Endothelial cell of umbilical vein (primary cell): ENCODE measurements at regions of chr7 and their contacts with region 1.

Region 1: GRCh38 chr7:2608921-2609411 is 22.8 kb upstream of the TTYH3 start:
- DNase-seq: peak; percentile 76
- H3K4me3 ChIP-seq: no peak overlapping the region
- H3K27ac ChIP-seq: no peak overlapping the region
- H3K4me1 ChIP-seq: peaks cover 13% of the 10 kb centered on the region
- H3K27me3 ChIP-seq: no peaks in the 10 kb centered on the region
- CTCF ChIP-seq: peak; percentile 70 to 73
- POLR2A ChIP-seq: no peak

Region 2: GRCh38 chr7:2384354-2385243 is 224.4 kb before region 1 on chr7:
- CTCF ChIA-PET with region 1: no interaction called
- POLR2A ChIA-PET with region 1: no interaction called
- dilution Hi-C with region 1: no loop called
- intact Hi-C with region 1: no loop called
- DNase-seq: no peak
- H3K4me3 ChIP-seq: no peak overlapping the region
- H3K27ac ChIP-seq: no peak overlapping the region
- H3K4me1 ChIP-seq: no peaks in the 10 kb centered on the region
- H3K27me3 ChIP-seq: no peaks in the 10 kb centered on the region
- CTCF ChIP-seq: no peak
- POLR2A ChIP-seq: no peak

Region 3: DNA sequence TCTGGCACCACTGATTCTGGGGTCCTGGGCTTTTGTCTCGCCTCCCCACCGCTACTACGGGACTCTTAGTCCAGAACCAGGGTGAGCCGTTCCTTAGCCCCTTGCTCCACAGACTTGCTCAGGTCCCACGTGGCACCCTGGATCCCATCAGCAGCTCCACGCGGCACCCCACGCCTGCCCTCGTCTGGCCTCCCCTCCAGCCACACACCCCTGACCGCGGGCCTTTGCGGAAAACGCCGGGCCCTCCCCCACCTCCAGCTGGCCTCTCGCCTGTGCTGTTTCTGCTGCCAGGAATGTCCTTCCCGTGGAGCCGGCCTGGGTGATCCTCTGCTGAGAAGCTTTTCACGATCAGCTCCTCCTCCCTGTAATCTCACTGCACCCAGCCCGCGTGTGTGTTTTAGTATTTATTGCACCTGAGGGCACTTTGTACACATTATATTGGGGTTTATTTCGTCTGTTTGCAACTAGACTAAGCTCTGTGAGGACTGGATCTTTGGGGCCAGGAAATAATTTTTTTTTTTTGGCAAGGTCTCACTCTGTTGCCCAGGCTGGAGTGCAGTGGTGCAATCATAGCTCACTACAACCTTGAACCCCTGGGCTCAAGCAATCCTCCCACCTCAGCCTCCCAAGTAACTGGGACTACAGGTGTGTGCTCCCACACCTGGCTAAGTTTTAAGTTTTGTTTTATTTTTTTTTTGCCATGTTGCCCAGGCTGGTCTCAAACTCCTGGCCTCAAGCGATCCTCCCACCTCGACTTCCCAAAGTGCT is 12.3 kb after region 1 on chr7:
- CTCF ChIA-PET with region 1: interaction called, 31 read pairs
- POLR2A ChIA-PET with region 1: no interaction called
- dilution Hi-C with region 1: no loop called
- intact Hi-C with region 1: no loop called
- DNase-seq: peak; percentile 49
- H3K4me3 ChIP-seq: no peak overlapping the region
- H3K27ac ChIP-seq: no peak overlapping the region
- H3K4me1 ChIP-seq: peaks cover 14% of the 10 kb centered on the region
- H3K27me3 ChIP-seq: no peaks in the 10 kb centered on the region
- CTCF ChIP-seq: no peak
- POLR2A ChIP-seq: no peak

Region 4: GRCh38 chr7:2632733-2633537 is 24.0 kb after region 1 on chr7:
- CTCF ChIA-PET with region 1: interaction called, 42 read pairs
- POLR2A ChIA-PET with region 1: no interaction called
- dilution Hi-C with region 1: no loop called
- intact Hi-C with region 1: loop called (anchors 1 kb)
- DNase-seq: peak; percentile 61
- H3K4me3 ChIP-seq: peak overlapping the region; percentile 80 to 97 (median 83)
- H3K27ac ChIP-seq: peak overlapping the region; percentile 90
- H3K4me1 ChIP-seq: peaks cover 31% of the 10 kb centered on the region
- H3K27me3 ChIP-seq: no peaks in the 10 kb centered on the region
- CTCF ChIP-seq: no peak
- POLR2A ChIP-seq: no peak

Region 5: GRCh38 chr7:2651336-2651735 is 42.4 kb after region 1 on chr7:
- CTCF ChIA-PET with region 1: interaction called, 55 read pairs
- POLR2A ChIA-PET with region 1: no interaction called
- dilution Hi-C with region 1: no loop called
- intact Hi-C with region 1: no loop called
- DNase-seq: no peak
- H3K4me3 ChIP-seq: no peak overlapping the region
- H3K27ac ChIP-seq: no peak overlapping the region
- H3K4me1 ChIP-seq: no peaks in the 10 kb centered on the region
- H3K27me3 ChIP-seq: no peaks in the 10 kb centered on the region
- CTCF ChIP-seq: peak in 1 of 2 donors; percentile 22
- POLR2A ChIP-seq: no peak

Region 6: GRCh38 chr7:2670720-2671391 is 61.9 kb after region 1 on chr7:
- CTCF ChIA-PET with region 1: interaction called, 12 read pairs
- POLR2A ChIA-PET with region 1: no interaction called
- dilution Hi-C with region 1: no loop called
- intact Hi-C with region 1: no loop called
- DNase-seq: peak; percentile 35
- H3K4me3 ChIP-seq: no peak overlapping the region
- H3K27ac ChIP-seq: no peak overlapping the region
- H3K4me1 ChIP-seq: no peaks in the 10 kb centered on the region
- H3K27me3 ChIP-seq: peaks cover 0 to 3% of the 10 kb centered on the region in 2 experiments
- CTCF ChIP-seq: peak; percentile 84 to 95
- POLR2A ChIP-seq: no peak